Activated CD4-positive, alpha-beta T cell treated with anti-CD3 and anti-CD28 coated beads for 36 hours (primary cell): ENCODE measurements at regions of chr13 and their contacts with region 1.

Region 1: DNA sequence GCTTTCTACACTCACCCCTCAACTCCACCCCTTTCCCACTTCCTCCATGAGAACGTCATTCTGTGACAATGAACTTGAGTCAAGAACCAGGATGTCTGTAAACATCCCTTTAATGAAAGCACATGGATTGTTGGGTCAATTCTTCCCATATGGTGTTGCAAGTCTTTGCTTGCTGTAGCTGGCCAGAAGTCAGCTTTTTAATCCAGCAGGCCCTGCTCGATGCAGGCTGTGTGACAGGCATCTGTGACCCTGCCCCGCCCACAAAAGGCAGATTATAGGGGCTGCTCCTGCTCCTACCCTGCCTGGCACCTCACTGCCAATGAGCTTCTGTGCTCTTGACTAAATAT is 78.0 kb downstream of the STARD13 start:
- DNase-seq: no peak
- ATAC-seq: no peak
- H3K4me3 Mint-ChIP-seq: no peak overlapping the region
- H3K27ac Mint-ChIP-seq: no peak overlapping the region
- H3K4me1 Mint-ChIP-seq: peaks cover 21% of the 10 kb centered on the region
- H3K27me3 Mint-ChIP-seq: peaks cover 14% of the 10 kb centered on the region

Region 2: DNA sequence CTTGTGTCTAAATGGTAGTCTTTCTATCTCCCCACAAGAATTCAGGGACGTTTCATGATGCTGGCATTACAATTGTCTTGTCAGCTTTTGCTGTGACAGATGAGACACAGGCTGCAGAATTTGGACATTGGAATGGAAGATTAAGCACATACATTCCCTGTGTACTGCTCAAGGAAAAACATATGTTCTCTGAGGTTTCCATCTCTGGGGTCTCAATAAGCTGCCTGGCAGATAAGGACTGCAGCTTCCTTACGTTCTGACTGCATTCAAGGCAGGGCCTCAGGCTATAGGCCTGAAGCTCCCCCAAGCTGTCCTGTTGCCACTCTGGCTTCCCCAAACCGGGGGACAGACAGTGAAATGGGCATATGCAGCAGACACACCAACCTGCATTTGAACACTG is 282.7 kb before region 1 on chr13:
- CTCF ChIA-PET with region 1: no interaction called
- POLR2A ChIA-PET with region 1: no interaction called
- intact Hi-C with region 1: no loop called
- DNase-seq: no peak
- ATAC-seq: no peak
- H3K4me3 Mint-ChIP-seq: no peak overlapping the region
- H3K27ac Mint-ChIP-seq: no peak overlapping the region
- H3K4me1 Mint-ChIP-seq: no peaks in the 10 kb centered on the region
- H3K27me3 Mint-ChIP-seq: peaks cover 3% of the 10 kb centered on the region

Region 3: GRCh38 chr13:32969516-32969941 is 238.1 kb before region 1 on chr13:
- CTCF ChIA-PET with region 1: no interaction called
- POLR2A ChIA-PET with region 1: interaction called, 10 read pairs
- intact Hi-C with region 1: no loop called
- DNase-seq: no peak
- ATAC-seq: no peak
- H3K4me3 Mint-ChIP-seq: no peak overlapping the region
- H3K27ac Mint-ChIP-seq: no peak overlapping the region
- H3K4me1 Mint-ChIP-seq: peaks cover 3% of the 10 kb centered on the region
- H3K27me3 Mint-ChIP-seq: peaks cover 4% of the 10 kb centered on the region